ENCODE measurements at regions of chr2 and their contacts with region 1.

Region 1: GRCh38 chr2:231557571-231558237 is 27.5 kb upstream of the NMUR1 start:
- DNase-seq: peak; percentile 92

Region 2: DNA sequence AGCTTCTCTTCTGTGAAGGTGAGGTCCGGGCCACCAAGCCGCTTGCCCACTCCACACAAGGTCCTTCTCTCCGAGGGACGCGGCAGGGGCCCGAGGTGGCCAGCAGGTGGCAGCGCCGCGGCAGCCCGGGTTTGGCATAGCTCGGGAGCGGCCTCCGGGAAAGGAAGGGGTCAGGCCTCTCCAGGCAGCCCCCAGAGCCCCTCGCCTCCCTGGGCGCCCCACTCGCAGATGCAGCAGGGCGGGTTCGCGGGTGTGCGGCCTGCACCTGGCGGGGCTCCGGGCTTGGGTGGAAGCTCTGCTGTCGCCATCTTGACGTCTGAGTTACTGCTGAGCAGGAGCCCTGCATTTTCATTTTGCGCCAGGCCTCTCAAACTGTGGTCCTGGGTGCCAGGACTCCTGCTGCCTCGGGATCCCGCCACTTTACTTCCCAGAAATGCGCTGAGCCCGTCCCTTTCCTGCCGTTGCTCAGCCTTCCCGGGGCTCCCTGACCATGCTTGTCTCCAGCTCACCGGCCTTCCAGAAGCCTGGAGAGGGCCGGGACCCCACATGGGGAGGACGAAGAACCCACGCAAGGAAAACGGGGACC is 74.8 kb before region 1 on chr2:
- intact Hi-C with region 1: loop called in 1 of 2 experiments (anchors 10 kb)
- DNase-seq: peak; percentile 94

Region 3: DNA sequence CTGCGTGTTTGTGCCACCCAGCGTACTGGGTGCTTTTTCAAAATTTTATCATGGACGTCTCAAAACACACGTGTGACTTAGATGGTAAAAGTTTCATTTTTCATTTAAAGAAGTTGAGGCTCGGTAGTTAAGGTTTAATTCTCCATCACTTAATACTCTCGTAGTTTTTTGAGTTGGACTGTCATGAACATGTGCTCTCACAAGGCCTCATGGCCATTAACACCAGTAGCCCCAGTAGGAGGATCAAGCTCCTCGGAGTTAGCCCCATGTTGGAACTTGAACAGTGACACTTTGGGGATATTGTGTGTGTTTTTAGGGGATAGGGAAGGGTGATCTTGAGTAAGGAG is 42.8 kb before region 1 on chr2:
- intact Hi-C with region 1: loop called (anchors 5 kb)
- DNase-seq: no peak